Naive thymus-derived CD4-positive, alpha-beta T cell (primary cell): ENCODE measurements at regions of chr5 and their contacts with region 1.

Region 1: GRCh38 chr5:112968411-112969106 is 8.0 kb upstream of the DCP2 start:
- DNase-seq: no peak
- ATAC-seq: no peak
- H3K4me3 ChIP-seq: no peak overlapping the region
- H3K4me3 Mint-ChIP-seq: no peak overlapping the region
- H3K27ac ChIP-seq: no peak overlapping the region
- H3K27ac Mint-ChIP-seq: no peak overlapping the region
- H3K4me1 ChIP-seq: no peaks in the 10 kb centered on the region
- H3K4me1 Mint-ChIP-seq: peaks cover 0 to 21% (median 7%) of the 10 kb centered on the region in 7 donors
- H3K27me3 ChIP-seq: no peaks in the 10 kb centered on the region
- H3K27me3 Mint-ChIP-seq: no peaks in the 10 kb centered on the region

Region 2: DNA sequence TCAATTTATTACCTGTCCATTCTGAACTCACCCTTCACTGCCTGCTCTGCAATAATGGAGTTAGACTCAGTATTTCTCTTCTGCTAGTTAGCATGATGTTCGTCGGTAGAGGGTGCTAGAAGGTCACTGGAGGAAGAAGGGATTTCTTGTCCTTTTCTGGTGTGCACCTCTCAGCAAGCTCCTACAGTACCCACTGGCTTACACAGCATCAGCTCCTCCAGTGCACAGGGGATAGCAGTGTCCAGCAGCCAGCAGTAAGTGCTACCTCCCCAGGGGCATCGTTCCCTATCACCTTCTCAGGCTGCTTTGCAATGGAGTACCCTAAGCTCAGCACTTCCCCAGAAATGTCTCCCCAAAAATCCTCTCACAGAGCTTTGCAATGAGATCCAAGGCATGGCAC is 276.8 kb before region 1 on chr5:
- CTCF ChIA-PET with region 1: no interaction called
- POLR2A ChIA-PET with region 1: no interaction called
- intact Hi-C with region 1: loop called (anchors 1 to 5 kb)
- DNase-seq: peak in 3 of 9 donors; percentile 16 to 50 (median 19)
- ATAC-seq: no peak
- H3K4me3 ChIP-seq: no peak overlapping the region
- H3K4me3 Mint-ChIP-seq: no peak overlapping the region
- H3K27ac ChIP-seq: no peak overlapping the region
- H3K27ac Mint-ChIP-seq: no peak overlapping the region
- H3K4me1 ChIP-seq: no peaks in the 10 kb centered on the region
- H3K4me1 Mint-ChIP-seq: no peaks in the 10 kb centered on the region
- H3K27me3 ChIP-seq: no peaks in the 10 kb centered on the region
- H3K27me3 Mint-ChIP-seq: peaks cover 36 to 68% (median 59%) of the 10 kb centered on the region in 5 donors

Region 3: DNA sequence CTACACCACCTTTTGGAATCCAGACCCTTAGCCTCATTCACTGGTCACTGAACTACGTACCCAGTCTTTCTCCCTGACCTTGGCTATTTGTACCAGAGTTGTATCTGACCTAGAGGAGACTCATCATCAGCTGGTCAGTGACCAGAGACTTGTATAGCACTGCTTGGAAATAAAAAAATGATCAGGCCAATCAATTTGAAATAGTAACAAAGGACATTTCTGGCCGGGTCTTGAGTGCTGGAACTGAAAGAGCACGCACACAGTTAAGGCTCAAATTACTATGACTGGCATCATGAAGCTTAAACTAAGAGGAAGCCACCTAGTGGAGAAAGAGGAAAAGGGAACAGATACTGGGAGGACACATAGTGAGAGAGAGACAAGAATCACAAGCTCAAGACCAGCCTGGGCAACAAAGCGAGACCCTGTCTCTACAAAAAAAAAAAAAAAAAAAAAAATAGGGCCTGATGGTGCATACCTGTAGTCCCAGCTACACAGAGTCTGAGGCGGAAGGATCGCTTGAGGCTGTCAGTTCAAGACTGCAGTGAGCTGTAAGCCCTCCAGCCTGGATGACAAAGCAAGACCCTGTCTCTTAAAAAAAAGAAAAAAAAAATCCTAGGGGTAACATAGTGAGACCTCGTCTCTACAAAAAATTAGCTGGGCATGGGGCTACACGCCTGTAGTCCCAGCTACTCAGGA is 120.3 kb before region 1 on chr5:
- CTCF ChIA-PET with region 1: no interaction called
- POLR2A ChIA-PET with region 1: no interaction called
- intact Hi-C with region 1: loop called in 1 of 2 experiments (anchors 1 kb)
- DNase-seq: peak in 7 of 9 donors; percentile 8 to 51 (median 40)
- ATAC-seq: peak; percentile 97
- H3K4me3 ChIP-seq: no peak overlapping the region
- H3K4me3 Mint-ChIP-seq: peak overlapping the region in 2 of 10 donors; percentile 16 to 41
- H3K27ac ChIP-seq: no peak overlapping the region
- H3K27ac Mint-ChIP-seq: peak overlapping the region in 3 of 9 donors; percentile 53 to 58 (median 53)
- H3K4me1 ChIP-seq: no peaks in the 10 kb centered on the region
- H3K4me1 Mint-ChIP-seq: peaks cover 4 to 8% (median 6%) of the 10 kb centered on the region in 7 donors
- H3K27me3 ChIP-seq: no peaks in the 10 kb centered on the region
- H3K27me3 Mint-ChIP-seq: peaks cover 0 to 20% (median 5%) of the 10 kb centered on the region in 5 donors

Region 4: GRCh38 chr5:112878760-112879159 is 89.8 kb before region 1 on chr5:
- CTCF ChIA-PET with region 1: no interaction called
- POLR2A ChIA-PET with region 1: no interaction called
- intact Hi-C with region 1: loop called (anchors 2 to 5 kb)
- DNase-seq: peak in 6 of 9 donors; percentile 5 to 58 (median 14)
- ATAC-seq: peak; percentile 69
- H3K4me3 ChIP-seq: peak overlapping the region; percentile 8
- H3K4me3 Mint-ChIP-seq: peak overlapping the region in 6 of 10 donors; percentile 1 to 67 (median 16)
- H3K27ac ChIP-seq: peak overlapping the region; percentile 15
- H3K27ac Mint-ChIP-seq: peak overlapping the region in 8 of 9 donors; percentile 1 to 90 (median 68)
- H3K4me1 ChIP-seq: peaks cover 5 to 21% of the 10 kb centered on the region in 2 donors
- H3K4me1 Mint-ChIP-seq: peaks cover 22 to 42% (median 30%) of the 10 kb centered on the region in 7 donors
- H3K27me3 ChIP-seq: no peaks in the 10 kb centered on the region
- H3K27me3 Mint-ChIP-seq: no peaks in the 10 kb centered on the region

Region 5: GRCh38 chr5:112930082-112930344 is 38.5 kb before region 1 on chr5:
- CTCF ChIA-PET with region 1: interaction called, 3 read pairs
- POLR2A ChIA-PET with region 1: no interaction called
- intact Hi-C with region 1: loop called in 1 of 2 experiments (anchors 1 kb)
- DNase-seq: peak in 7 of 9 donors; percentile 57 to 83 (median 76)
- ATAC-seq: peak; percentile 92
- H3K4me3 ChIP-seq: no peak overlapping the region
- H3K4me3 Mint-ChIP-seq: peak overlapping the region; percentile 0 to 86 (median 68)
- H3K27ac ChIP-seq: no peak overlapping the region
- H3K27ac Mint-ChIP-seq: peak overlapping the region in 6 of 9 donors; percentile 0 to 88 (median 4)
- H3K4me1 ChIP-seq: peaks cover 28 to 38% of the 10 kb centered on the region in 2 donors
- H3K4me1 Mint-ChIP-seq: peaks cover 31 to 63% (median 51%) of the 10 kb centered on the region in 7 donors
- H3K27me3 ChIP-seq: no peaks in the 10 kb centered on the region
- H3K27me3 Mint-ChIP-seq: no peaks in the 10 kb centered on the region

Region 6: DNA sequence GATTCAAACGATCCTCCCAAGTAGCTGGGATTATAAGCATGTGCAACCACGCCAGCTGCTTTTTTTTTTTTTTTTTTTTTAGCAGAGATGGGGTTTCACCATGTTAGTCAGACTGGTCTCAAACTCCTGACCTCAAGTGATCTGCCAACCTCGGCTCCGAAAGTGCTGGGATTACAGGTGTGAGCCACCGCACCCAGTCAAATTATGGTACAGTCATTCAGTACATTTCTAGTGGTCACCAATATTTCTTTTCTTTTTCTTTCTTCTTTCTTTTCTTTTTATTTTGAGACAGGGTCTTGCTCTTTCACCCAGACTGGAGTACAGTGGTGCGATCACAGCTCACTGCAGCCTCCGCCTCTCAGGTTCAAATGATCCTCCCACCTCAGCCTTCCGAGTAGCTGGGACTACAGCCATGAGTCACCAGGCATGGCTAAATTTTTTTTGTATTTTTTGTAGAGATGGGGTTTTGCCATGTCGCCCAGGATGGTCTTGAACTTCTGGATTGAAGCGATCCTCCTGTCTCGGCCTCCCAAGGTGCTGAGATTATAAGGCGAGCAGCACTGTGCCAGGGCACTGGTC is 17.3 kb before region 1 on chr5:
- CTCF ChIA-PET with region 1: no interaction called
- POLR2A ChIA-PET with region 1: no interaction called
- intact Hi-C with region 1: no loop called
- DNase-seq: no peak
- ATAC-seq: no peak
- H3K4me3 ChIP-seq: no peak overlapping the region
- H3K4me3 Mint-ChIP-seq: no peak overlapping the region
- H3K27ac ChIP-seq: no peak overlapping the region
- H3K27ac Mint-ChIP-seq: no peak overlapping the region
- H3K4me1 ChIP-seq: no peaks in the 10 kb centered on the region
- H3K4me1 Mint-ChIP-seq: peaks cover 0 to 6% (median 6%) of the 10 kb centered on the region in 7 donors
- H3K27me3 ChIP-seq: no peaks in the 10 kb centered on the region
- H3K27me3 Mint-ChIP-seq: peaks cover 0 to 25% (median 0%) of the 10 kb centered on the region in 5 donors

Region 7: GRCh38 chr5:113090336-113091106 is 122.0 kb after region 1 on chr5:
- CTCF ChIA-PET with region 1: no interaction called
- POLR2A ChIA-PET with region 1: no interaction called
- intact Hi-C with region 1: no loop called
- DNase-seq: peak in 3 of 9 donors; percentile 17 to 44 (median 24)
- ATAC-seq: peak; percentile 51
- H3K4me3 ChIP-seq: no peak overlapping the region
- H3K4me3 Mint-ChIP-seq: peak overlapping the region in 4 of 10 donors; percentile 1 to 59 (median 19)
- H3K27ac ChIP-seq: no peak overlapping the region
- H3K27ac Mint-ChIP-seq: peak overlapping the region in 5 of 9 donors; percentile 15 to 65 (median 51)
- H3K4me1 ChIP-seq: no peaks in the 10 kb centered on the region
- H3K4me1 Mint-ChIP-seq: peaks cover 0 to 24% (median 18%) of the 10 kb centered on the region in 7 donors
- H3K27me3 ChIP-seq: no peaks in the 10 kb centered on the region
- H3K27me3 Mint-ChIP-seq: peaks cover 0 to 26% (median 5%) of the 10 kb centered on the region in 5 donors